Activated naive CD4-positive, alpha-beta T cell treated with anti-CD3 and anti-CD28 coated beads for 36 hours (primary cell): ENCODE measurements at regions of chr2 and their contacts with region 1.

Region 1: DNA sequence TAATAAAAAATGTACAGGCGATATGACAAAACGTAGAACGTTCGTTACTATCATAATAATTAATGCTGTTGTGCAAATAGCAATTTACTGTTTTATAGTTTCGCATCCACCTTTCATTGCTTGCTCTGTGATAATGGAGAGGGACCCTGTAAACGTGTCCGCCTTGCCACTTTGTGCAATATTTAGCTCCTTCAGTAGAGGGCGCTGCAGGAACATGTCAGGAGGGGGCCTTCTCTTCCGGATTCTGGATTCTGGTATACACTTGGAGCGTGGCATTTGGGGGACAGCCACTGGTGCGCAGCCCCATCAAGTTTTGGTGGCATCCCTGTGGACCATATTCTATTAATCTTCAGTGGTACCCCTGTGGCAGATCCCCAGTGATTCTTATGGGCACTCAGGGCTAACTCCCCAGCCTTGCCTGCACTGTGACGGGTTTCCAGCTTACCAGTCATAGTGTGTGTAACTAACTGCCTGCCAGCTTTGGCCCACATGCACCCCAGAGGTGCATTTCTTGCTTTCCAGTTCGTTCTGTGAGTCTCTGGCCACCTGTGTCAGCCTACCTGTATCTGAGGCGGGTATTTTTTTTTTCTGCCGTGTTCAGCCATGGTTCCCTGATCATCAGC is 140.3 kb downstream of the CYRIA start:
- DNase-seq: peak; percentile 51
- H3K4me3 Mint-ChIP-seq: no peak overlapping the region
- H3K27ac Mint-ChIP-seq: no peak overlapping the region
- H3K4me1 Mint-ChIP-seq: no peaks in the 10 kb centered on the region
- H3K27me3 Mint-ChIP-seq: peaks cover 20% of the 10 kb centered on the region

Region 2: GRCh38 chr2:16496426-16497388 is 28.7 kb before region 1 on chr2:
- CTCF ChIA-PET with region 1: interaction called, 11 read pairs
- intact Hi-C with region 1: no loop called
- DNase-seq: no peak
- H3K4me3 Mint-ChIP-seq: no peak overlapping the region
- H3K27ac Mint-ChIP-seq: no peak overlapping the region
- H3K4me1 Mint-ChIP-seq: no peaks in the 10 kb centered on the region
- H3K27me3 Mint-ChIP-seq: peaks cover 12% of the 10 kb centered on the region